Activated CD4-positive, alpha-beta memory T cell treated with anti-CD3 and anti-CD28 coated beads for 36 hours (primary cell): ENCODE measurements at regions of chr1 and their contacts with region 1.

Region 1: GRCh38 chr1:53959664-53960250 is 13.6 kb downstream of the LRRC42 start:
- DNase-seq: no peak
- H3K4me3 Mint-ChIP-seq: no peak overlapping the region
- H3K27ac Mint-ChIP-seq: no peak overlapping the region
- H3K4me1 Mint-ChIP-seq: peaks cover 8% of the 10 kb centered on the region
- H3K27me3 Mint-ChIP-seq: no peaks in the 10 kb centered on the region

Region 2: DNA sequence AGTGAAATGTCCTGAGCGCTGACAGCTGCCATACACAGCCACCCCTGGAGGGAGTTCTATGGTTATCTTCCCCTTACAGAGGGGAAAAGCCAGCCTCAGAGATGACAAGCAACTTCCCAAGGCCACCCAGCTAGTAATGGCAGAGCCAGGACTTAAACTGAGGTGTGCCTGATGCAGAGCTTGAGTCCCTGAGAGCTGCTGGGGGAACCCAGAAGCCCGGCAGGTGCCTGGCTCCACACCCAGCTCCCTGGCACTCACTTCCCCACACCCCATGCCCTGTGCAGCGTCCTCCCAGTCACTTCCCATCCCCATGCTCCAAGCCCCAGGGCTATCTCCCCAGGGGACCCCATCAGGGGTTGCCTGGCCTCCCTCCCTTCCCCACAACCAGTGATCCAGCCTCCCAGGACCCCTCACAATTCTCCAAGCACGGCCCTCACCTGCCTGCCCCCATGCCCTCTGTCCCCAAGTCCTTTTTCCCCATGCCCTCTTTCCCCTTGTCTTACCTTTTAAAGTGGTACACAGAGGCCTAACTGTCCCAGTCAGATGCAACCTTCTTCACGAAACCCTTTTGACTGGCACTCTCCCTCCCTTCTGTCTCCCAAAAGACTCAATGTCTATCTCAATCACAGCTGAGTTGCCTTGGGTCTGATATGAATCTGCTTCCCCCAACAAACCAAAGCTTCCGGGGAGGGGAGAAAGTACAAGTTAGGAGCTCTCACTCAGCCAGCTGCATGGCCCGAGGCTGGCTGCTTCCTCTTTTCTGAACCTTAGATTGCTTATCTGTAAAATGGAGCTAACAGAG is 592.1 kb before region 1 on chr1:
- CTCF ChIA-PET with region 1: no interaction called
- POLR2A ChIA-PET with region 1: no interaction called
- intact Hi-C with region 1: no loop called
- DNase-seq: peak; percentile 63
- H3K4me3 Mint-ChIP-seq: peak overlapping the region; percentile 61
- H3K27ac Mint-ChIP-seq: peak overlapping the region; percentile 77
- H3K4me1 Mint-ChIP-seq: peaks cover 18% of the 10 kb centered on the region
- H3K27me3 Mint-ChIP-seq: no peaks in the 10 kb centered on the region

Region 3: GRCh38 chr1:53869454-53870117 is 90.2 kb before region 1 on chr1:
- CTCF ChIA-PET with region 1: interaction called, 18 read pairs
- POLR2A ChIA-PET with region 1: no interaction called
- intact Hi-C with region 1: no loop called
- DNase-seq: no peak
- H3K4me3 Mint-ChIP-seq: no peak overlapping the region
- H3K27ac Mint-ChIP-seq: no peak overlapping the region
- H3K4me1 Mint-ChIP-seq: no peaks in the 10 kb centered on the region
- H3K27me3 Mint-ChIP-seq: no peaks in the 10 kb centered on the region

Region 4: GRCh38 chr1:53878492-53879105 is 81.2 kb before region 1 on chr1:
- CTCF ChIA-PET with region 1: interaction called, 78 read pairs
- POLR2A ChIA-PET with region 1: no interaction called
- intact Hi-C with region 1: loop called (anchors 1 kb)
- DNase-seq: no peak
- H3K4me3 Mint-ChIP-seq: no peak overlapping the region
- H3K27ac Mint-ChIP-seq: no peak overlapping the region
- H3K4me1 Mint-ChIP-seq: no peaks in the 10 kb centered on the region
- H3K27me3 Mint-ChIP-seq: no peaks in the 10 kb centered on the region

Region 5: DNA sequence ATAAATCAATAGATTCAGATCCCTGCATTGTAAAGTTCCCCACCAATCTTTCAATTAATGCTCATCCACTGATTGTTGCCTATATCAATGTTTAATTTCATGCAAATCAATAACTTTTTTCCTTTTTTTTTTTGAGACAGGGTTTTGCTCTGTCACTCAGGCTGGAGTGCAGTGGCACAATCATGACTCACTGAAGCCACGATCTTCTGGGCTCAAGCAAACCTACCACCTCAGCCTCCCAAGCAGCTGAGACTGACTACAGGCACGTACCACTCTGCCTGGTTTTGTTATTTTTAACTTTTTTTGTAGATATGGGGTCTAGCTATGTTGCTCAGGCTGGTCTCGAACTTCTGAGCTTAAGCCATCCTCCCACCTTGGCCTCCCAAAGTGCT is 40.1 kb before region 1 on chr1:
- CTCF ChIA-PET with region 1: interaction called, 11 read pairs
- POLR2A ChIA-PET with region 1: no interaction called
- intact Hi-C with region 1: no loop called
- DNase-seq: peak; percentile 41
- H3K4me3 Mint-ChIP-seq: no peak overlapping the region
- H3K27ac Mint-ChIP-seq: peak overlapping the region; percentile 73
- H3K4me1 Mint-ChIP-seq: peaks cover 32% of the 10 kb centered on the region
- H3K27me3 Mint-ChIP-seq: no peaks in the 10 kb centered on the region

Region 6: GRCh38 chr1:53971718-53972117 is 12.0 kb after region 1 on chr1:
- CTCF ChIA-PET with region 1: interaction called, 11 read pairs
- POLR2A ChIA-PET with region 1: no interaction called
- intact Hi-C with region 1: no loop called
- DNase-seq: no peak
- H3K4me3 Mint-ChIP-seq: no peak overlapping the region
- H3K27ac Mint-ChIP-seq: no peak overlapping the region
- H3K4me1 Mint-ChIP-seq: no peaks in the 10 kb centered on the region
- H3K27me3 Mint-ChIP-seq: no peaks in the 10 kb centered on the region